ENCODE measurements at regions of chr1 and their contacts with region 1.

Region 1: DNA sequence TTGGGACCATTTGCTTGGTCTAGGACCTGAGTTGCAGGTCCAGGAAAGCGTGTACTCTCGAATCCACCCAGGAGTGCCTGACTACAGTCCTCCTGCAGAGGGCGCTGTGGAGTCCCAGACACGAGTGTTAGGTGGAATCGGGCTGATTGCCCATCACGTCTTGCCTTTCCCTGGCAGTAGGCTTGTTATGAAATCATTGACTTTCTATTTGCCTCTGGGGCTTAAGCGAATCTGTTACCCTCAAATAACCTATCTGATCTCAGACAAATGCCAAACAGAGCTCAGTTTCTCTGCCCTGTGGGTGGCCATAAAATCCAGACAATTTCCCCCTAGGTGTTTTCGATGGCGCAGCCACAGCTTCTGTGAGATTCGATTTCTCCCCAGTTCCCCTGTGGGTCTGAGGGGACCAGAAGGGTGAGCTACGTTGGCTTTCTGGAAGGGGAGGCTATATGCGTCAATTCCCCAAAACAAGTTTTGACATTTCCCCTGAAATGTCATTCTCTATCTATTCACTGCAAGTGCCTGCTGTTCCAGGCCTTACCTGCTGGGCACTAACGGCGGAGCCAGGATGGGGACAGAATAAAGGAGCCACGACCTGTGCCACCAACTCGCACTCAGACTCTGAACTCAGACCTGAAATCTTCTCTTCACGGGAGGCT is at the start of gene IL20:
- DNase-seq: peak; percentile 90
- ATAC-seq: peak; percentile 96
- H3K4me3 ChIP-seq: no peak within 1 kb of the TSS
- H3K27ac ChIP-seq: peak within 1 kb of the TSS; percentile 38
- H3K4me1 ChIP-seq: peaks cover 7% of the 10 kb centered on the region
- H3K27me3 ChIP-seq: no peaks in the 10 kb centered on the region
- CTCF ChIP-seq: peak; percentile 93
- total RNA-seq, gene IL20: not detected

Region 2: DNA sequence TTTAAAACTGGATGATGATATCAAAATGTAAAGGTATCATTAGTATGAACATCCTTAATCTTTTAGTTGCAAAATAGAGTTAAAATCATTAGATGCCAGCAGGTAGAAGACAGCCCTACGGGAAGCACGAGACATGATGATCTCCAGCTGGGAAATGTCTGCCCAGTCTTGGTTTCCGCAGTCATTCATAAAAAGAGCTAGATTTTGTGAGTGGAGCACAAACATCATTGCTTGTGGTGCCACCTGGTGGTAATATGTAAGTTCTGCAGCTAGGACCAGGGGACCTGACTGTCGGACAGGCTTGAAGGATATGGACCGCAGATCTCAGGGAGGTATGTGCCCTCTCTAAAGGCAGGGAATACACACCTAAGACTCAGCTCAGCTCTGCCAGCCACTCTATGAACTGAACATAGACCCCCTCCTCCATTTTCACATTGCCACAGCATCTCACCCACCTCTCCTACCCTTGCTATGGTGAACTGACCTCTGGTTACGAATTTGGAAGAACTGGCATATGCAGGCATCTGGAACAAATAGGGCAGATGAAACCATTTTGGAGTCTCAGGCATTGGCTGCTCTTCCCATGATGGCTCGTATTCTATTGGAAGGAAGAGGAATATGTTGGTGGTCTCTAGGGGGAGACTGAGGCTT is 47.4 kb after region 1 on chr1:
- intact Hi-C with region 1: loop called (anchors 10 kb)
- DNase-seq: peak; percentile 56
- ATAC-seq: peak; percentile 35 to 45
- H3K4me3 ChIP-seq: no peak overlapping the region
- H3K27ac ChIP-seq: no peak overlapping the region
- H3K4me1 ChIP-seq: peaks cover 23% of the 10 kb centered on the region
- H3K27me3 ChIP-seq: no peaks in the 10 kb centered on the region
- CTCF ChIP-seq: peak; percentile 87

Measured in lower lobe of right lung (tissue), 2 donors.